ENCODE measurements at regions of chr1 and their contacts with region 1.

Region 1: GRCh38 chr1:100866041-100866900 is 28.4 kb downstream of the EXTL2 start:
- DNase-seq: no peak
- H3K4me3 ChIP-seq: no peak overlapping the region
- H3K27ac ChIP-seq: no peak overlapping the region
- H3K27me3 ChIP-seq: no peaks in the 10 kb centered on the region
- CTCF ChIP-seq: peak; percentile 60

Region 2: DNA sequence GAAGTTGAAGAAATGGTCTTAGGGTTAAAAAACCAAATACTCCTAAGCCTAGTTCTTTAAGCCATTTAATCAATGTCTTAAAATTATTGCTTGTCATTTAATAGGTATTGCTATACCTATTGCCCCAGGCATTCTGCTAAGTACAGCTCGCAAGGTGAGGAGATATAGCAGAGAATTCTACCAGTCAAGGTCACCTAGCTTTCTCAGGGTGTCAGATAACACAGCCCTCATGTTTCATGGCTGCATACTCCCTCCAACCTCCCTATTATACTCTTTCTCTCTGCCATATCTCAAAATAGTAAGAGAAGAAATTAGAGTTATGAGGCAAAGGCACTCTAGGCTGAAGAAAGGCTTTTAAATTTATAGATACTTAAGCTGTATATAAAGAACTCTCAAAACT is 396.7 kb before region 1 on chr1:
- CTCF ChIA-PET with region 1: interaction called, 481 read pairs
- POLR2A ChIA-PET with region 1: no interaction called
- DNase-seq: no peak
- H3K4me3 ChIP-seq: no peak overlapping the region
- H3K27ac ChIP-seq: no peak overlapping the region
- H3K27me3 ChIP-seq: no peaks in the 10 kb centered on the region
- CTCF ChIP-seq: no peak

Region 3: DNA sequence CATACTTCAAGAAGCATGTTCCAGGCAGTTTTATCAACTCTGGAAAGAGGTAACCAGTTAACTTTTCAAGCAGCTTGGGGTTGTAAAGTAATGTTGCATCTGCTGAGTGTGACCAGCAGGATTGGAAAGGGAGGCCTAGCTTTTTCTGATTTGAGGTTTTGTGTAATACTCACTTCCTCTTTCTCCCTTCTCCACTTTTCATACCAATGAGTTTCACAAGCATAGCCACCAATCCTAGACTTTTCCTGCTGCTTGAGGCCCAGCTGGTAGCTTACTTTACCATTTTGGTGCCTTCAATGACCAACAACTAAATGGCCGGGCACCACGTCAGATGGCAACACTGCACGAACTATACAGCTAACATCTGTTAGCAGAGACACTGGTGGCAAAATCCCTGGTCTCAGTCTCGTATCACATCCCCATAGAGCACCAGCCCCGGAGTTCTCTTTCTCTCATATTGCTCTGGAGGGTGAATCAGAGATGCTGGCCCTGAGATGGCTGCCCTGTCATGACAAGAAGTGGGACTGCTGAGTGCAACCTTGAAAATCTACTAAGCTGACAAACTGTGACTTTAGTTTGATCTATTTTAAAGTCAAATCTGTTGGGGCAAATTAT is 343.1 kb before region 1 on chr1:
- CTCF ChIA-PET with region 1: interaction called, 31 read pairs
- POLR2A ChIA-PET with region 1: no interaction called
- DNase-seq: no peak
- H3K4me3 ChIP-seq: no peak overlapping the region
- H3K27ac ChIP-seq: no peak overlapping the region
- H3K27me3 ChIP-seq: no peaks in the 10 kb centered on the region
- CTCF ChIP-seq: no peak

Region 4: DNA sequence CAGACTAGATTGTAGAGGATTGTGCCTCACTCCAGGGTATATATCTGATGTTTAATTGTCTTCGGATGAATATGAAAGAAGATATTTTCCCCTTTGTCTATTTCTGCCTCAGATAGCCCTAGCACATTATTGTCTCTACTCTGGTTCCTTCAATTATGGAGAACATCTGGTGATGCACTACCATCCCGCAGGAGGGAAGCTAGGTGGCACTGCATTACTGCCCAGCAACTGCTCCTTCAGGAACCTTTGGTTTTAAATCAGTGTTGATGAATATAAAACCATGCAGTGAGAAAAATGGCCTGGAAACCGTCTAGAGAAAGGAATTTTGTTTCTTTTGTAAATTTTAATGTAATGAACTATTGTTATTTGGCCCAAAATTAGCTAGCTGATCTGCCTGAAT is 259.8 kb before region 1 on chr1:
- CTCF ChIA-PET with region 1: interaction called, 57 read pairs
- POLR2A ChIA-PET with region 1: no interaction called
- DNase-seq: no peak
- H3K4me3 ChIP-seq: no peak overlapping the region
- H3K27ac ChIP-seq: no peak overlapping the region
- H3K27me3 ChIP-seq: no peaks in the 10 kb centered on the region
- CTCF ChIP-seq: peak; percentile 84

Region 5: GRCh38 chr1:100671601-100672000 is 194.7 kb before region 1 on chr1:
- CTCF ChIA-PET with region 1: interaction called, 10 read pairs
- POLR2A ChIA-PET with region 1: no interaction called
- DNase-seq: peak; percentile 8
- H3K4me3 ChIP-seq: no peak overlapping the region
- H3K27ac ChIP-seq: no peak overlapping the region
- H3K27me3 ChIP-seq: no peaks in the 10 kb centered on the region
- CTCF ChIP-seq: peak; percentile 30